ENCODE measurements at regions of chr15 and their contacts with region 1.

Region 1: DNA sequence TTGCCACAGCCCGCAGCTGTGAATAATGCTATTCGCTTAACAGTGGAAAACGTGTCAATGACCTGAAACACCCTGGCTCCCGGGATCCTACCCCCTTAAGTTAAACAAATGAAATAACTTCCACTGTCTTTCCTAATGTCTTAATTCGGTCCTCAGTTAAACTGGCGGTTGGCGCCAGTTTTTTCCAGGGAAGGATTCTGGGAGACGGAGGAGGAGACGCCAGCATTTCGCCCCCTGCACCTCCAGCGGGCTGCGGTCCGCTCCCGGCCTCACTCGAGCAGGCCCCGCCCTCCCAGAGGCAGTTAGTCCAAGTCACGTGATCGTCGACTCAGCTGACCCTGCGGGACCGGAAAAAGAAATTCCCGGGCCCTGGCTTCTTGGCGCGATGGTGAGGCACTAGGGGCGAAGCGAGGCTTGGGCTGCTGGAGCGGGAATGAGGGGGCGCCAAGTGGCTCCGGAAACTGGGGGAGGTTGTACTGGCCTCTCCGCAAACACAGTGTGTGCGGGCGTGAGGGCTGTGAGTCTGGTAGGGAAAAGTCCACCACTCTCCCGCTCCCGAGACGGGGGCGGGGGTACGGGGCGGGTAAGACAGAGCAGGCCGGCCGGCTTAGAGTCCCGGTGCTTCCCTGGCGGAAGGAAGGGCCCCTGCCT is at the start of gene COMMD4:
- DNase-seq: peak; percentile 95 to 97
- ATAC-seq: peak; percentile 87 to 98 (median 95)
- H3K4me3 ChIP-seq: peak within 1 kb of the TSS; percentile 67 to 83 (median 78)
- H3K27ac ChIP-seq: peak within 1 kb of the TSS in 9 of 10 donors; percentile 37 to 88 (median 64)
- H3K4me1 ChIP-seq: peaks cover 4 to 24% (median 13%) of the 10 kb centered on the region in 9 donors
- H3K27me3 ChIP-seq: no peaks in the 10 kb centered on the region
- CTCF ChIP-seq: no peak
- total RNA-seq, gene COMMD4: 29.0 to 45.6 (median 38.0) TPM

Region 2: DNA sequence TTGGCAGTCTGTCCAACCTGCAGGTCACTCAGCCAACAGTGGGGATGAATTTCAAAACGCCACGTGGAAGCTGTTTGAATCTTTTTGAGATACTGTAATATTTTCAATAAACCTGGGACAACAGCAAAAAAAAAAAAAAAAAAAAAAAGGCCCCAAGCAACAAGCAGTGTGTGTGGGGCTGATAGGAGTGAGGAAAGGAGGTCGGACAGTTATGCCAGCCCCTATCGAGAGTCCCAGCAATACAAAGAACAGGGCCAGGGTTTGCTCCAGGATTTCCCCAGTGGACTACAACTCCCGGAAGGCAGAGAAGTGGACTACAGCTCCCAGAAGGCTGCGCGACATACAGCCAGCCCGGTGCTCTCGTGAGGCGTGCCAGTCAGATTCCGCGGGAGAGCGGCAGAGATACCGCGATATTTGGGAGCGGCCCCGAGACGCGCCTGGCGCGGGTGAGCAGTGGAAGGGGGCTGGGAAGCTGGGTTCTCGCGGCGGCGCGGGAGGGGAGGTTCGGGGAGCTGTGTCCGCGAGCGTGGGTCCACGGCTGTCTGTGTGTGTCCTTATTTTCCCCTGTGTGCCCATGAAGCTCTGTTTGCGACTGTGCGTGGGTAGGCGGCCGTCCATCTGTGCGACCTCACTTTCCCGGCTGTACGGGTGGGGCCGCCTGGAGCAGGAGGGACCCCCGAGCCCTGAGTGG is 312.5 kb before region 1 on chr15 and contains the start of gene PPCDC:
- intact Hi-C with region 1: loop called in 1 of 10 experiments (anchors 10 kb)
- DNase-seq: peak; percentile 97
- ATAC-seq: peak; percentile 97 to 100 (median 99)
- H3K4me3 ChIP-seq: peak within 1 kb of the TSS; percentile 47 to 98 (median 86)
- H3K27ac ChIP-seq: peak within 1 kb of the TSS in 9 of 10 donors; percentile 88 to 97 (median 91)
- H3K4me1 ChIP-seq: peaks cover 4 to 28% (median 16%) of the 10 kb centered on the region in 9 donors
- H3K27me3 ChIP-seq: no peaks in the 10 kb centered on the region
- CTCF ChIP-seq: no peak
- total RNA-seq, gene PPCDC: 3.6 to 11.0 (median 5.8) TPM